H1 (cell line): ENCODE measurements at regions of chr6 and their contacts with region 1.

Region 1: DNA sequence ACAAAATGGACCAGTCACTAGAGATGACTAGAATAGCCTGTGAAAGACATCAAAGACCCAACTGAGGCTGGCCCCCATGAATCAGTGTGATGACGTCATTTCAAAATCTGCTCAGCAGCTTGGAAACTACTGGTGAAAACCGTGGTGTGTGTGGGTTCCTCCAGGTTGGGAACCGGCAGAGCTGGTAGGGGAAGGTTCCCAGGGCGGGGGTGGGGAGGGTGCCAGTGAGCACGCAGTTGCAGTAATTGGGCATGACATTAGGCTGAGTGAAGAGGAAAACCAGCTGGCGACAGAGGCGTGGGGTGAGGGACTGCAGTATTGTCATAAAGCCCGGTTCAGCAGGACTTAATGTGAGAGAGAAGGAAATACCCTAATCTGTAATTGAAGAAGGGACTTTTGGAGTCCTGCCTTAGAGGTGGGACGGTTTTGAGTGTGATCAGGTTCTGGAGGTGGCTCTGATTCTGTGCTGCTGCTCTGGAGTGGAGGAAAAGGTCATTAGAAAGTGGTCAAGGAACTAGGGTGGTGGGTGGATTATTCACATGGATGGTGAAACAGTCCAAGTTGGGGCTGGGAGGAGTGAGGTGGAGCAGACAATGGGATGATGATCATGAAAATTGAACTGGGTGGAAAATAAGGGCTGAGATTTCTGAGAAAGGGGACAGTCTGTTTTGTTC is 52.0 kb upstream of the MTHFD1L start:
- DNase-seq: no peak
- H3K4me3 ChIP-seq: no peak overlapping the region
- H3K27ac ChIP-seq: no peak overlapping the region
- H3K4me1 ChIP-seq: 0 out of 7 replicates have a peak, but pooled peaks cover 0 to 2% (median 0%) of the 10 kb centered on the region in 4 experiments
- H3K27me3 ChIP-seq: no peaks in the 10 kb centered on the region; a peak in 1 of 7 replicates
- CTCF ChIP-seq: no peak
- EP300 ChIP-seq: no peak
- POLR2A ChIP-seq: no peak
- RAD21 ChIP-seq: no peak

Region 2: DNA sequence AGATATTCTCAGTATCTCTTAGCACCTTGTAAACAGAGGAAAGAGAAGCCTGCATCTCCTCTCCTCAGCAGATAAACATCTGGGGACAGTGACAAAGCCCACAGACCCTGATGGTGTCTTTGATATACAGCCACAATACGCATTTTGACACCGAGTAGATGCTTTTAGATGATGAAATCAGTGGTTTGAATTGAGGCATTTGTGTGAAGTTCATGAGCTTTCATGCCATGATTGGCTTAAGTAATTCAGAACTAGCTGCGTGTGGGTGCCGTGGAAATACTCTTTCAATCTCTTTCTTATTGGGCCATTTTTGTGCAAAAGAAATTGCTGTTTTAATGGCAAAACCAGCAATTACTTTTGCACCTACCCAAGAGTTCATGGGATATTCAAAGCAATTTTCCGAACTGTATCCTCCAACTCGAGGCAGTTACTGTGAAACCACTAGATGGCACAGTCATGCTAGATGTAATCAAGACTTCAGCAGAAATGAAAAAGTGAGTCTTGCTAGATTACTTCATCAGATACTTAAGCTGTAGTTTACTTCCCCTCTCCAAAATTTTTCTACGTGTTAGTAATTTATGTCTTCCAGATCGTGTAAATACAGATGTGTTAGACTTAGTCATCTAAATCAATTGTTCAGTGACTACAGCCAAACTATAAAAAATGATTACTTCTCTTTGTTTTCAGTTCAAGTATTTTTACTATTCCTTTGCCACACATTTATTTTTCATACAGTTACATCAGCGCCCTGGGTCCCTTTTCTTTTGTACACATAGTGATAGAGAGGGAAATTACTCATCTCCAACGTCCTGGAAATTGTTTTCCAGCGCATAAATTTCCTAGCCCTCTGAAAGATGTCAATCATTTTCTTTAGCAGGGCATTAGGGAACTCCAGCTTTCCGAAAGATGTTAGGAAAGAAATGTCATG is 395.3 kb before region 1 on chr6:
- CTCF ChIA-PET with region 1: interaction called, 150 read pairs
- POLR2A ChIA-PET with region 1: interaction called, 7 read pairs
- DNase-seq: no peak
- H3K4me3 ChIP-seq: no peak overlapping the region
- H3K27ac ChIP-seq: no peak overlapping the region
- H3K4me1 ChIP-seq: no peaks in the 10 kb centered on the region
- H3K27me3 ChIP-seq: no peaks in the 10 kb centered on the region
- CTCF ChIP-seq: peak in 2 of 3 experiments; percentile 75 to 81; a peak in 3 of 4 replicates
- EP300 ChIP-seq: no peak
- POLR2A ChIP-seq: no peak
- RAD21 ChIP-seq: peak; percentile 88 to 92

Region 3: GRCh38 chr6:150830439-150831165 is 17.1 kb after region 1 on chr6:
- CTCF ChIA-PET with region 1: interaction called, 18 read pairs
- POLR2A ChIA-PET with region 1: no interaction called
- DNase-seq: no peak
- H3K4me3 ChIP-seq: no peak overlapping the region
- H3K27ac ChIP-seq: no peak overlapping the region
- H3K4me1 ChIP-seq: no peaks in the 10 kb centered on the region
- H3K27me3 ChIP-seq: no peaks in the 10 kb centered on the region
- CTCF ChIP-seq: no peak
- EP300 ChIP-seq: no peak
- POLR2A ChIP-seq: no peak
- RAD21 ChIP-seq: no peak

Region 4: DNA sequence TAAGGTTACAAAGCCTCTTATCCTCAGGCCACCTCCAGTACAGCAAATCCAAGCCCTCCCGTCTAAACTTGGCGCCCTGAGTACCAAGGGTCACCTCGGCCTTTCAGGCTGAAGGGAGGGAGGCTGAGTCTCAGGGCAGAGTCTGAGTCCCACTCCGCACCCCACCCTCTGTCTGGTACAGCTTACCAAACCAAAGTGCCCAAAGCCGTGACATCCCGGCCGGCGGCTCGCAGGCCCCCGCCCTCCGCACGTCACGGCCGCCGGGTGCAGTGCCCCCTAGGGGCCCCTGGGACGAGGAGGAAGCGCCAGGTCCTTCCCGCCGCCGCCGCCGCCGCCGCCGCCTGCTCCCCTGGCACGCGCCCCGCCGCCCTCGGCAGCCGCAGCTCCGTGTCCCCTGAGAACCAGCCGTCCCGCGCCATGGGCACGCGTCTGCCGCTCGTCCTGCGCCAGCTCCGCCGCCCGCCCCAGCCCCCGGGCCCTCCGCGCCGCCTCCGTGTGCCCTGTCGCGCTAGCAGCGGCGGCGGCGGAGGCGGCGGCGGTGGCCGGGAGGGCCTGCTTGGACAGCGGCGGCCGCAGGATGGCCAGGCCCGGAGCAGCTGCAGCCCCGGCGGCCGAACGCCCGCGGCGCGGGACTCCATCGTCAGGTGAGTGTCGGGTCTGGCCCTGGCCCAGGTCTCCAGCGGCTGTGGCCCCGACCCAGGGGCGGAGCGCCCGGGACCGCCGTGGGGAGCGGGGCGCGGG is 52.1 kb after region 1 on chr6 and contains the start of gene MTHFD1L:
- CTCF ChIA-PET with region 1: interaction called, 23 read pairs
- POLR2A ChIA-PET with region 1: interaction called, 3 read pairs
- DNase-seq: peak in 1 of 2 experiments; percentile 89
- H3K4me3 ChIP-seq: peak within 1 kb of the TSS; percentile 56 to 96 (median 74)
- H3K27ac ChIP-seq: peak within 1 kb of the TSS; percentile 90
- H3K4me1 ChIP-seq: peaks cover 0 to 3% (median 1%) of the 10 kb centered on the region in 4 experiments; a peak in 2 of 7 replicates
- H3K27me3 ChIP-seq: no peaks in the 10 kb centered on the region
- CTCF ChIP-seq: peak; percentile 45 to 58 (median 55)
- EP300 ChIP-seq: peak in 1 of 2 experiments; percentile 17; a peak in 1 of 3 replicates
- POLR2A ChIP-seq: no peak
- RAD21 ChIP-seq: 0 out of 4 replicates have a peak, but pooled peaks of 1 of the 2 experiments have one; percentile 16
- total RNA-seq, gene MTHFD1L: 104 and 105 TPM in 2 replicates

Region 5: DNA sequence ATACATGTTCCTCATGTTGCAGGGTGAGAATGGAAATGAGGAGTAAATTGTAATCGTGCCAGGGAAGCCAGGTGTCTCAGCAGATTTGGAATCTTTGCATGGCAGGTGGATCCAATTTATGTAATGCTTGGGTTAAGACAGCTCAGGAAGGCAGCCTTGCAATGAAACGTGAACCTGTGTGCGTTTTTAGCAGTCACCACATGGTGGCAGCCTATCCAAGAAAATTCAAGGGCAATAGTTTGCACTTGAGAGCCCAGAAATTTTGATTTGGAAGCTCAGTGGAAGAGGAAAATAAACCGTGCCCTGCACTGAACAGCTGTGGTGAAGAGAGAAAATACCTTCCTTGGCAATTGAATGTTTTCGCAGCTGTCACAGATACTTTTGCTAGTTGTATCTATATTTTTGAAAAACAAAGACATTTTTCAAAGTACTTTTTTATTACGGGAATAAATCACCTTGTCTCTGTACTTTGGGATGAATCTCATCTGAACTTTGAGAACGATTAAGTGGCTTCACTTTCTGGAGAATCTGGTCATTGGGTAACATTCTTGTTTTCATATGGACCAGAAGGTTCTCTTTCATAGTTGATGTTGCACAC is 78.5 kb after region 1 on chr6:
- CTCF ChIA-PET with region 1: interaction called, 14 read pairs
- POLR2A ChIA-PET with region 1: no interaction called
- DNase-seq: peak; percentile 50 to 83
- H3K4me3 ChIP-seq: no peak overlapping the region
- H3K27ac ChIP-seq: no peak overlapping the region
- H3K4me1 ChIP-seq: peaks cover 0 to 3% (median 0%) of the 10 kb centered on the region in 4 experiments; a peak in 1 of 7 replicates
- H3K27me3 ChIP-seq: no peaks in the 10 kb centered on the region
- CTCF ChIP-seq: peak; percentile 51 to 90 (median 73)
- EP300 ChIP-seq: no peak
- POLR2A ChIP-seq: no peak
- RAD21 ChIP-seq: peak; percentile 81